AG04450 (cell line): ENCODE measurements at regions of chr6 and their contacts with region 1.

Region 1: GRCh38 chr6:38973178-38974054 is 75.2 kb upstream of the GLP1R start:
- DNase-seq: peak; percentile 38
- H3K4me3 ChIP-seq: no peak overlapping the region
- H3K27ac ChIP-seq: no peak overlapping the region
- H3K27me3 ChIP-seq: no peaks in the 10 kb centered on the region
- CTCF ChIP-seq: peak; percentile 72

Region 2: GRCh38 chr6:39302669-39303424 is 329.4 kb after region 1 on chr6:
- CTCF ChIA-PET with region 1: interaction called, 18 read pairs
- POLR2A ChIA-PET with region 1: no interaction called
- DNase-seq: peak; percentile 2
- H3K4me3 ChIP-seq: no peak overlapping the region
- H3K27ac ChIP-seq: no peak overlapping the region
- H3K27me3 ChIP-seq: no peaks in the 10 kb centered on the region
- CTCF ChIP-seq: peak; percentile 81